BJ (cell line): ENCODE measurements at regions of chr13 and their contacts with region 1.

Region 1: GRCh38 chr13:101098873-101099272 is 317.4 kb downstream of the NALCN start:
- DNase-seq: no peak
- H3K4me3 ChIP-seq: no peak overlapping the region
- H3K27me3 ChIP-seq: no peaks in the 10 kb centered on the region
- CTCF ChIP-seq: no peak

Region 2: DNA sequence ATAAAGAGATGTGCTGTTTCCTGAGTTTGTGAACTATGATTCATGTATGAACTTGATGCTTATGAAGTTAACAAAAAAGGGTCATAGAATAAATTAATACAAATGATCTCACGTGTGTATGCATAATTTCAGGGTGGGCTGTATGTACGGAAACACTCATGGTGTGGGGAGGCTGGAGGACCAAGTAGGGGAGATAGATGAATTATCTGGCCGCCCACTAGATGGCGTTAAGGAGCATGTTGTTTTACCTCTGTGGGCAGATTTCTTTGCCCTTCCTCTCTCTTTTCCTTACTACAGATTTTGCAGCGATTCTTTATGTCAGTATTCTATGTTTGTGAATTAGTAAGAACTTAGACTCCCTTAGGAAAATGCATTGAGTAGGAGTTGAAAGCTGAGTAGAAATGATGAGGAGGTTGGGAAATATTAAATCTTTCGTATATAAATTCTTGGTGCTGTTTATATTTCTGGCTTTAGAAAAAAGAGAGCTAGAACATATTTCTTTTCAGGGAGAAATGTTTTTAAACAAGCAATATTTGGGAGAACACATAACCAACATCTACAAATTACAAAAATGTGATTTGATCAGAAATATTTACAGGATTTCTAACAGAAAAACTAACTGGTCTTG is 376.9 kb before region 1 on chr13:
- CTCF ChIA-PET with region 1: interaction called, 31 read pairs
- POLR2A ChIA-PET with region 1: no interaction called
- DNase-seq: no peak
- H3K4me3 ChIP-seq: no peak overlapping the region
- H3K27me3 ChIP-seq: peaks cover 2% of the 10 kb centered on the region; the same call in 1 of the 2 replicates
- CTCF ChIP-seq: peak; percentile 83

Region 3: DNA sequence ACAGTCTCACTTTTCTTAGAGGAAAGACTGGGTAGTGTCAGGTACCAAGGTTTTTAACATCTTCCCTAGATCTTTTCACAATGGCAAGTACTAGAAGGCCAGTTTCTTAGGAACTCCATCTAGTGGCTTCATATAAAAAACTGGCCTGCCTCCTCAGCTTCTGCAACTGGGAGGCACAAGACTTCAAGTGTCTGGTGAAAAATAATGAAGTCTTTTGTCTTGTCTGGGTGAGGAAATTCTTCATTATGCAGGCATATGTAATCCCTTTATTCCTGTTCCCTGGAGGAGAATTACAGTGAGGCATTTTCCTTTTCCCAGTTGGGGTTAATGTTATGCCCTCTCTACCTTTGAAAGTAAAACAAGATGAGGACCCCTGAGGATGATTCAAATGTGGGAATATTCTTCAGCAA is 16.9 kb after region 1 on chr13:
- CTCF ChIA-PET with region 1: no interaction called
- POLR2A ChIA-PET with region 1: no interaction called
- DNase-seq: no peak
- H3K4me3 ChIP-seq: no peak overlapping the region
- H3K27me3 ChIP-seq: no peaks in the 10 kb centered on the region; the same call in 1 of the 2 replicates
- CTCF ChIP-seq: no peak

Region 4: DNA sequence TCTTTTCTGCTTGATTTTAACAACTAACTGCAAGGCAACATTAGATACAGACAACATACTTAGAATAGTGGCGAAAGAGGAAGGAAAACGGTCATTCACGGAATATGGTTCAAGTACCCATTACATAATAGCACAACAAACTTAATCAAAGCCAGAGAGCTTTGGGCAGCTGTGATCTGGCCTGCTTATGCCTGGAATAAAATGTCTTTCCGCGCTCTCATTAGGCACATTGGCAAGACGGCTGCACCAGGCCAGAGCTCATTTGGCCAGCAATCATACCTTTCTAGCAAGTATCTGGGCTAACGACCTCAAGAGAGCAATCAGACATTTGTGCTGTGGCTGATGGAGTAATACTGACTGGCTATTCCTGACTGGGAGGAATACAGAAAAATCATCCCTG is 204.6 kb after region 1 on chr13:
- CTCF ChIA-PET with region 1: no interaction called
- POLR2A ChIA-PET with region 1: no interaction called
- DNase-seq: no peak
- H3K4me3 ChIP-seq: no peak overlapping the region
- H3K27me3 ChIP-seq: no peaks in the 10 kb centered on the region
- CTCF ChIP-seq: no peak